ENCODE measurements at regions of chr6 and their contacts with region 1.

Region 1: DNA sequence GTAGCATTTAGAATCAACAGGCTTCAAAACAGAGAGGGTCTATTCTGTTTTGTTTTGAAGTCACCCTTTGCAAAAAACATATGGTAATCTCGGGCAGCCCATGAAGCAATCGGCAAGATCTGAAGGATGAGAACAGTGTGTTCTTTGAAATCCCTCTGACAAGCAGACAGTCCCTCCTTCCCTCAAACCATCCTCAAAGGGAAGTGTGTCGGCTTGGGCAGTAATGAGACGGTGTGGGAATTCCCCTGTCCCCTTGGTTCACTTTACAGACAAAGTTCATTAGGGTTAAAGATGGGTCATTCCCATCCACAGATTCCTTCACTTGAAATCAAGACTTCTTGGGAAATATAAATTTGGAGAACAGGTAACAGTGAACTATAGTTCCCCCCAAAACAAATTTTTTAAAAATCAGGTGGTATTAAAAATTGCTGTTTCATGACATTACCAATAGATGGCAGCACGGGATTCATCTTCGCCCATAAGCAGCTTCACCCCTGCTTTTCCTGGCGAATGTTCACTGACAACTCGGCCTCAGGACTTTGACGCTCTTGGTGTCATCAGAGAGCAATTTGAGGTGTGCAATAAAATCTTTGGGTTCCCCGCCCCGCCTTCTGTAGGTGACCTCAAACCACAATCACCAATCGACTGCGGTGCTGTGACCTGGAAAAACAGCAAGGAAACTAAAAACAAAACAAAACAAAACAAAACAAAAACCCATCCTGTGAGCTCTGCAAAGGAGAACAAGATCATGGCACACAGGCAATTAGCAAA is 159.3 kb upstream of the TNFAIP3 start:
- H3K4me3 Mint-ChIP-seq: peak overlapping the region; percentile 51
- H3K27ac Mint-ChIP-seq: no peak overlapping the region
- H3K4me1 Mint-ChIP-seq: peaks cover 42% of the 10 kb centered on the region
- H3K27me3 Mint-ChIP-seq: peaks cover 71% of the 10 kb centered on the region

Region 2: DNA sequence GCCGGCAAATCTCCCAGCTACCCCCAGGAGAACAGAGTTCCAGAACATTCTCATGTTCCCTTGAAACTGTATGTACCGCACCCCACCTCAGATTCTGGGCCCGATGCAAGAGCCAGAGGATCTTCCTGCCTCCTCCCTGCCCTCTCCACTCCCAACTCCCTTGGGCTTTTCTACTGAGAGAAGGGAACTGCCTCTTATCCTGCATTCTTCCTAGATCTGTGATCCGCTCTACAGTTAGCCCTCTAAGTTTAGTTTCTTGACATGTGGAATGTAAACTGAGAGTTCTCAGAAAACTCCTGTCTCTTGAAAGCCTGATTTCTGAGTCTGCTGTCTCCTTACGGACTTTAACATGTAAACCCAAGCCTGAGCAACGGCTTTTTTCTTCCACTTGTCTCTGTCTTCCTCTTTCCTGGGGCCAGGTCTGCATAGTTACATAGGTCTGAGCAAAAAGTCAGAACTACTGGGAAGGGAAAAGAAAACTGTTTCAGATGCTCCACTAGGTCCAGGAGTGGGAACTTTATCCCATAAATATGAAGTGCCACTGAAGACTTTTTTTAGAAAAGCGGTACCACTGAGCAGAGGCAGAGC is 72.8 kb after region 1 on chr6:
- intact Hi-C with region 1: no loop called
- H3K4me3 Mint-ChIP-seq: no peak overlapping the region
- H3K27ac Mint-ChIP-seq: peak overlapping the region; percentile 1
- H3K4me1 Mint-ChIP-seq: peaks cover 21% of the 10 kb centered on the region
- H3K27me3 Mint-ChIP-seq: peaks cover 26% of the 10 kb centered on the region

Region 3: GRCh38 chr6:137811121-137811915 is 103.5 kb after region 1 on chr6:
- intact Hi-C with region 1: loop called (anchors 5 kb)
- H3K4me3 Mint-ChIP-seq: peak overlapping the region; percentile 60
- H3K27ac Mint-ChIP-seq: peak overlapping the region; percentile 66
- H3K4me1 Mint-ChIP-seq: peaks cover 36% of the 10 kb centered on the region
- H3K27me3 Mint-ChIP-seq: peaks cover 30% of the 10 kb centered on the region

Region 4: GRCh38 chr6:137944793-137945498 is 237.2 kb after region 1 on chr6:
- intact Hi-C with region 1: loop called (anchors 2 kb)
- H3K4me3 Mint-ChIP-seq: no peak overlapping the region
- H3K27ac Mint-ChIP-seq: peak overlapping the region; percentile 54
- H3K4me1 Mint-ChIP-seq: peaks cover 22% of the 10 kb centered on the region
- H3K27me3 Mint-ChIP-seq: no peaks in the 10 kb centered on the region

Region 5: GRCh38 chr6:138007014-138007472 is 299.3 kb after region 1 on chr6:
- intact Hi-C with region 1: loop called (anchors 2 kb)
- H3K4me3 Mint-ChIP-seq: no peak overlapping the region
- H3K27ac Mint-ChIP-seq: no peak overlapping the region
- H3K4me1 Mint-ChIP-seq: no peaks in the 10 kb centered on the region
- H3K27me3 Mint-ChIP-seq: peaks cover 2% of the 10 kb centered on the region